HepG2 (cell line): ENCODE measurements at regions of chr16 and their contacts with region 1.

Region 1: DNA sequence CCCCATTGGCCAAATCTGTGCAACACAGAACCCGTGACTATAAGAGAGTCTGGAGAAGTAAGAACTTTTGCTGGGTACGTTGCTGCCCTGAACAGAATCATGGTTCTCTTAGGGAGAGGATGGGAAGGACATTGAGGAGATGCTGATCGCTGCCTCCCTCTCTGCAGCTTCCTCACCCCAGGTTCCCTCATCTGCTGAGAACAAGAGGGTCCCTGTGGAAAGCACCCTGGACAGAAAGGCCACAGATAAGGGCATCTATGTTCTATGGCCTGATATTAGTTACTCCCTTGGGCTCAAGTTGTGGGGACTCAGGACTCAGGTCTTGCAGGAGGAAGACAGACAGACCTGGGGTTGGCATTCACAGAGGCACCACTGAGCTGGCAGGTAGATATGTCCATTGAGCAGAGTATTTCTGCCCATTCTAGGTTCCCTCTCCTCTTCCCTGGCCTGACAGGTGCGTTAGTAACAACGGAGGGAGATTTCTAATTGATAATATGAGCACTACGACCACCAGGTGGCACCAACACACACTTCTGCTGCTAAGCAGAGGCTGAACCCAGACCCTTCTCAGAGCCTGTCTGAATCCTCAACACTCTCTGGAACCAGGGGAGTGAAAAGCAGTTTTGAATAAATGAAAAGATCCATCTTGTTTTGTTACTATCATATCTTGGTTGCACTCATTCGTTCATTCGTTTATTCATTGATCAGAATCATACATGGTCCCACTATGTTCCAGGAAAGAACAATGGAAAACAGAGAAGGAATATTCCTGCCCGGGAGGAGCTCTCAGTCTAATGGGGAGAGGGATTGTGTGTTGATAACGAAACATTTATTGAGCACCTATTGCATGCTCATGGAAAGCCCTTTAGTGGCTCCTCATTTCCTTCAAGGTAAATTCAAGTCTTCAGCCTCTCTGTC is 56.4 kb downstream of the SLC6A2 start:
- DNase-seq: peak; percentile 61
- ATAC-seq: peak; percentile 94
- H3K4me3 ChIP-seq: no peak overlapping the region
- H3K27ac ChIP-seq: no peak overlapping the region
- H3K4me1 ChIP-seq: peaks cover 8% of the 10 kb centered on the region; the same call in 1 of the 2 replicates
- H3K27me3 ChIP-seq: peaks cover 0 to 2% of the 10 kb centered on the region in 2 experiments; a peak in 2 of 5 replicates
- CTCF ChIP-seq: peak; percentile 90
- EP300 ChIP-seq: no peak
- POLR2A ChIP-seq: no peak
- RAD21 ChIP-seq: peak; percentile 84

Region 2: DNA sequence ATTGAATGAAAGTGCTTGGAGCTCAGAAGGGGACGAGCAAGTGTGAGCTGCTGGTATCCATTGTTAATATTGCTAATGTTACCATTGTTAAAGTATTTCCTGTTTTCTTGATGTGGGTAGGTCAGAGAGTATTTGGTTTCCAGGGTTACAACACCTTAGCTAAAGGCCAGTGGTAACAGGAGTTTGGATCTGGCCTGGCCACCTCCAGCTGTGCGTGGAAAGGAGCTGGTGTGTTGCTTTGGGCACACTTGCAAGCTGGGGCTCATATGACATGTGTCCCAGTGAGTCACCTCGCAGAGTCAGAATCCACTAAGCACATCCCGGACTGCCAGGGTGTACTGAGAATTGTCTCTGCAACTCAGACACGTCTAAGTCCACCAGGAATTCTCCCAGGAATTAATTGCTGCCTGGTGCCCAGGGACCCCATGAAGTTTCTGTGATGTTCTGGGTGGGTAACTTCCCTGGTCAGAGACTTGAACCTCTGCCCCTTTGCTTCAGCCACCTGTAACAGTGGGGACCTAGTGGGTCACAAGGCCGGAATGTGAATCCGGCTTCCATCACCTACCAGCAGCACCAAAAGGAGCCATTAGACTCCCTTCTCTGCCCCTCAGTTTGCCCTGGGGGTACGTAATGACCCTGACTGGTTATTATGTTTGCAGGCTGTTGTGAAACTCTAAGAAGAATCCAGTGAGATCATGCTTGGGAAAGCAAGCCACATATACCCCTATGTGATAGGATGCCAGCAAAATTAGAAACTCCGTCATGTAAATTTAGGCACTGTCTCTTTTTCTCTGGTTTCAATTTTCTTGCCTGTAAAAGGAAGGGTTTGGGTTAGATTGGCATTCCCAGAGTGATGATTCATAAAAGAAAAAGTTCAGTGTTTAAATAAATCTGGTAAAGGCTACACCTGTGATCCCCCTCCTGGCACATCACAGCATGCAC is 43.6 kb before region 1 on chr16:
- CTCF ChIA-PET with region 1: no interaction called
- POLR2A ChIA-PET with region 1: no interaction called
- in situ Hi-C with region 1: no loop called
- intact Hi-C with region 1: no loop called
- DNase-seq: peak; percentile 33
- ATAC-seq: no peak; the same call in 2 of the 3 replicates
- H3K4me3 ChIP-seq: no peak overlapping the region
- H3K27ac ChIP-seq: no peak overlapping the region
- H3K4me1 ChIP-seq: peaks cover 44% of the 10 kb centered on the region
- H3K27me3 ChIP-seq: no peaks in the 10 kb centered on the region
- CTCF ChIP-seq: no peak
- EP300 ChIP-seq: no peak
- POLR2A ChIP-seq: no peak
- RAD21 ChIP-seq: no peak

Region 3: DNA sequence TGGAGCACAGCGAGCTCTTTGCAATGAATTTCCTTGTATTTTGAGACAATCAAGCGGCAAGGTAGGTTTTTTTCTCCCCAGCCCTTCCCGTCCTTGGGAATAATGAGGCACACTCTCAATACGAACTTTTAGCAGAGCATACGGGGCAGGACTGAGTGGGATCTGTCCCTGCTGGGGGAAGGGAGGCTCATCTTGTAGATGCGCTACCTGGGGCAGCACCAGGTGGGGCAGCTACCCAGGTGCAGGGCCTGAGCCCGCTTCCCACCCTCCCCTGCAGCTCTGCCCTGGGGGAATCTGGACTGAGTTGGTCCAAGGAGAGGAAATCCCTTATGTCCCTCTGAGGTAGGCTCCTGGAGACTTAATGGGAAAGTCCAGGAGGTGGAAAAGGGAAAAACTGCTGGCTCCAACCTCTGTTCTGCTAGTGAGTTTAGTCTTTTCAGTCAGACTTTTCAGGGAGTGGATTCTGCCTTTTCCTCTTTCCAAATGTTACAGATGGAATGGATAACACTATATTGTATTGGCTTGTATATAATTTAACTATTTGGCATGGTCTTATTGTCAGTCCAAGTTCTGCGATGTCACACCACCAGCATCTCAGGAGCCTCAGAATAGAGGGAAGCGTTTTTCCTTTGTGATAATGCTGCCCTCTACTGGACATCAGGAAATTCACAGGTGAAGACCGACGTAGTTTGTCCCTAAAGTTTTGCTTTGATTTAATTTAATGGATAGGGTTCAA is 130.3 kb after region 1 on chr16:
- CTCF ChIA-PET with region 1: interaction called, 83 read pairs
- POLR2A ChIA-PET with region 1: no interaction called
- in situ Hi-C with region 1: loop called (anchors 5 kb)
- intact Hi-C with region 1: loop called (anchors 1 kb)
- DNase-seq: peak; percentile 56
- ATAC-seq: peak; percentile 86
- H3K4me3 ChIP-seq: no peak overlapping the region
- H3K27ac ChIP-seq: no peak overlapping the region
- H3K4me1 ChIP-seq: peaks cover 6% of the 10 kb centered on the region; the same call in 1 of the 2 replicates
- H3K27me3 ChIP-seq: peaks cover 2 to 12% of the 10 kb centered on the region in 2 experiments; a peak in 4 of 5 replicates
- CTCF ChIP-seq: peak; percentile 85
- EP300 ChIP-seq: no peak
- POLR2A ChIP-seq: no peak
- RAD21 ChIP-seq: peak; percentile 76